Heart right ventricle (tissue), 16 donors: ENCODE measurements at regions of chr3 and their contacts with region 1.

Region 1: GRCh38 chr3:146589899-146590508 is 15.1 kb downstream of the PLSCR5 start:
- DNase-seq: peak in 1 of 2 donors; percentile 16
- ATAC-seq: no peak
- H3K4me3 ChIP-seq: no peak overlapping the region
- H3K27ac ChIP-seq: no peak overlapping the region
- H3K4me1 ChIP-seq: no peaks in the 10 kb centered on the region
- H3K27me3 ChIP-seq: no peaks in the 10 kb centered on the region
- CTCF ChIP-seq: peak in 7 of 9 donors; percentile 52 to 69 (median 57)

Region 2: DNA sequence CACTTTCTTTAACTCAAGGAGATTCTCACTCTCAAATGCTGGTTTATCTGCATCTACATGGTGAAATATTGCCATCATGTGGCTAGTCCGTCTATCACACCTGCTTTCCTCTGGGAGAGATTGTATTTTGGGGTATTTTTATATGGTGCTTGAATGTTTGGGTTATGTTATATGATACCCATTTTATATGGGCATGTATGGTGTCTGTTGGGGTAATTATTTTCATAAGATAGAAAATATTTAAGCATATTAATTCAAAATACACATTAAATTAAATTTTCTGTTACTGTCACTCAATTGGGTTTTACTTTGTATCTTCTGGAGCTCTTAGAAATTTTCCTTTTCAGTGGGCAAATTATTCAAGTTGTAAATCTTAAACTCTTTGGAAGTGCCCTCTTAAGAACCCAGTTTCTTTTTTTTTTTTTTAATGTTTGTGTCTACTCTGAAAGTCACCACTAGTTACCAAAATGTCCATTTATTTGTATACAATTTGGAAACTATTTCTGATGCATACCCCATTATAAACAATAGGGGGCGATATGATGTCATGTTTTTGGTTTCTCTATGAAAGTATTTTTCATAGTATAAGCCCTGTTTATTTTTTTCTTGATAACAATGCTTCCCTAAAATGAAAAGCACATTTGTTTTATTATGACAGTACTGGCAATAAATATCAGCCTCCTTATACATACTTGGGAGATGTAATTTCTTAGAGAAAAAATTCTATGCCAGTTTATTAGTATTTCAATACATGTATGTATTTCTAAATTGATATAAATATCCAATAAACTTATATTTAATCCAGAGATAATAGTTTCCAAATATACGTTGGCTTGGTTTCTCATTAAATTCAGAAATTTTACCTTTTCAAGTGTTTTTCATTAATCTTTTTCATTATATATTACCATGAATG is 51.2 kb after region 1 on chr3:
- intact Hi-C with region 1: loop called in 2 of 10 experiments (anchors 5 kb)
- DNase-seq: no peak
- ATAC-seq: no peak
- H3K4me3 ChIP-seq: no peak overlapping the region
- H3K27ac ChIP-seq: no peak overlapping the region
- H3K4me1 ChIP-seq: no peaks in the 10 kb centered on the region
- H3K27me3 ChIP-seq: no peaks in the 10 kb centered on the region
- CTCF ChIP-seq: peak in 8 of 9 donors; percentile 15 to 60 (median 44)

Region 3: GRCh38 chr3:146682171-146682570 is 92.2 kb after region 1 on chr3:
- intact Hi-C with region 1: no loop called
- DNase-seq: no peak
- ATAC-seq: no peak
- H3K4me3 ChIP-seq: no peak overlapping the region
- H3K27ac ChIP-seq: no peak overlapping the region
- H3K4me1 ChIP-seq: no peaks in the 10 kb centered on the region
- H3K27me3 ChIP-seq: no peaks in the 10 kb centered on the region
- CTCF ChIP-seq: no peak

Region 4: DNA sequence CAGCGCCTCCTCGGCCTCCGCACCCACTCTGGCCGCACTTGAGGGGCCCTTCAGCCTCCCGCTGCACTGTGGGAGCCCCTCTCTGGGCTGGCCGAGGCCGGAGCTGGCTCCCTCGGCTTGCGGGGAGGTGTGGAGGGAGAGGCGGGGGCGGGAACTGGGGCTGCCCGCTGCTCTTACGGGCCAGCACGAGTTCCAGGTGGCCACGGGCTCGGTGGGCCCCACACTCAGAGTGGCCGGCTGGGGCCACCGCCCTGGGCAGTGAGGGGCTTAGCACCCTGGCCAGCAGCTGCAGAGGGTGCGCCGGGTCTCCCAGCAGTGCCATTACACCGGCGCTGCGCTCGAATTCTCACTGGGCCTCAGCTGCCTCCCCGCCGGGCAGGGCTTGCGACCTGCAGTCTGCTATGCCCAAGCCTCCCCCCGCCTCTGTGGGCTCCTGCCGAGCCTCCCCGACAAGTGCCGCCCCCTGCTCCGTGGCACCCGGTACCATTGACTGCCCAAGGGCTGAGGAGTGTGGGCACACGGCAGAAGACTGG is 182.3 kb after region 1 on chr3:
- intact Hi-C with region 1: no loop called
- DNase-seq: peak in 1 of 2 donors; percentile 5
- ATAC-seq: no peak
- H3K4me3 ChIP-seq: no peak overlapping the region
- H3K27ac ChIP-seq: no peak overlapping the region
- H3K4me1 ChIP-seq: no peaks in the 10 kb centered on the region
- H3K27me3 ChIP-seq: no peaks in the 10 kb centered on the region
- CTCF ChIP-seq: no peak